CD8-positive, alpha-beta T cell (primary cell): ENCODE measurements at regions of chr17 and their contacts with region 1.

Region 1: GRCh38 chr17:51427856-51428255 is 167.5 kb downstream of the UTP18 start:
- DNase-seq: peak; percentile 39 to 89 (median 66)
- ATAC-seq: peak; percentile 82
- H3K4me3 ChIP-seq: no peak overlapping the region
- H3K4me3 Mint-ChIP-seq: peak overlapping the region; percentile 17
- H3K27ac ChIP-seq: peak overlapping the region; percentile 13 to 23
- H3K27ac Mint-ChIP-seq: peak overlapping the region; percentile 91
- H3K4me1 ChIP-seq: peaks cover 42% of the 10 kb centered on the region
- H3K4me1 Mint-ChIP-seq: peaks cover 52% of the 10 kb centered on the region
- H3K27me3 ChIP-seq: no peaks in the 10 kb centered on the region
- H3K27me3 Mint-ChIP-seq: no peaks in the 10 kb centered on the region
- CTCF ChIP-seq: no peak

Region 2: DNA sequence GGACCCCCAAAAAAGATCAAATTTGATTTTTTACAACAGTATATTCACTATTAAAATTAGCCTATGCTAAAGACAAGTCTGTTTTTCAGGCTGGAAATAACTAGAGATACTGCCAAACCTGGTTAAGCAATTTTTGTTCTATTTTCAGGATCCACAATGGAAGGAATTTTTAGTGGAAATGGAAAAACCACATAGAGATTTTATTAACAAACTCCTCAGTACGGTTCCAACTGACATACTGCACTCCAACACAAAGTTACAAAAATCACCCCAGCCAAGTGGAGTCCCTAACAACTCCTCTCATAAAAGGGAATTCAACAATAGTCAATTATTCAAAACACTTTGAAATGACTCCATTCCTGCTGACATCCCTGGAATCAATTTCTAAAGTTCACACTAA is 460.1 kb before region 1 on chr17:
- CTCF ChIA-PET with region 1: no interaction called
- POLR2A ChIA-PET with region 1: no interaction called
- intact Hi-C with region 1: no loop called
- DNase-seq: no peak
- ATAC-seq: no peak
- H3K4me3 ChIP-seq: no peak overlapping the region
- H3K4me3 Mint-ChIP-seq: no peak overlapping the region
- H3K27ac ChIP-seq: no peak overlapping the region
- H3K27ac Mint-ChIP-seq: no peak overlapping the region
- H3K4me1 ChIP-seq: no peaks in the 10 kb centered on the region
- H3K4me1 Mint-ChIP-seq: peaks cover 4% of the 10 kb centered on the region
- H3K27me3 ChIP-seq: no peaks in the 10 kb centered on the region
- H3K27me3 Mint-ChIP-seq: no peaks in the 10 kb centered on the region
- CTCF ChIP-seq: no peak

Region 3: GRCh38 chr17:51461578-51462004 is 33.7 kb after region 1 on chr17:
- CTCF ChIA-PET with region 1: interaction called, 8 read pairs
- POLR2A ChIA-PET with region 1: no interaction called
- intact Hi-C with region 1: loop called in 1 of 2 experiments (anchors 1 kb)
- DNase-seq: peak in 8 of 9 experiments; percentile 8 to 61 (median 42)
- ATAC-seq: peak; percentile 57
- H3K4me3 ChIP-seq: no peak overlapping the region
- H3K4me3 Mint-ChIP-seq: no peak overlapping the region
- H3K27ac ChIP-seq: no peak overlapping the region
- H3K27ac Mint-ChIP-seq: no peak overlapping the region
- H3K4me1 ChIP-seq: no peaks in the 10 kb centered on the region
- H3K4me1 Mint-ChIP-seq: no peaks in the 10 kb centered on the region
- H3K27me3 ChIP-seq: no peaks in the 10 kb centered on the region
- H3K27me3 Mint-ChIP-seq: peaks cover 8% of the 10 kb centered on the region
- CTCF ChIP-seq: peak; percentile 66

Region 4: DNA sequence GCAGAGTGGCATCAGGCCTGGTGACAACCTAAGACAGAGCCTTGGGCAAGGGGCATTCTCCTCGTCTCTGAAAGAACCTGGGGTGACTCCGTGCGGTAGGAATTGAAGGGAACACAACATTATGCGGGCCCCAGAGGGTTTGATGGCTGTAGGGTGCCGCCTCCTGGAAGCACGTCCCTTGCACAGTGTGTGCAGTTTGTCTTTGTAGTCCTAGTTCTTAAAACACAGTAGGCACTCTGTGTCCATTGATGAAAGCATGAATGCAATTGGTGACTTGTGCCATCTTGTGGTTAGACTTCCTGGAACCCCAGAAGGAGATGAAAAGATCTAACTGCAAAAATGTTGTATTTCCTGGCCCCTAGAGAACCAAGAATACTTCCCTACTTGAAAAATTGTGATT is 112.3 kb after region 1 on chr17:
- CTCF ChIA-PET with region 1: no interaction called
- POLR2A ChIA-PET with region 1: no interaction called
- intact Hi-C with region 1: no loop called
- DNase-seq: peak in 2 of 9 experiments; percentile 7 to 21
- ATAC-seq: no peak
- H3K4me3 ChIP-seq: no peak overlapping the region
- H3K4me3 Mint-ChIP-seq: no peak overlapping the region
- H3K27ac ChIP-seq: no peak overlapping the region
- H3K27ac Mint-ChIP-seq: no peak overlapping the region
- H3K4me1 ChIP-seq: no peaks in the 10 kb centered on the region
- H3K4me1 Mint-ChIP-seq: peaks cover 11% of the 10 kb centered on the region
- H3K27me3 ChIP-seq: no peaks in the 10 kb centered on the region
- H3K27me3 Mint-ChIP-seq: no peaks in the 10 kb centered on the region
- CTCF ChIP-seq: no peak